ENCODE measurements at regions of chr20 and their contacts with region 1.

Region 1: GRCh38 chr20:50790651-50791277 is 4.1 kb upstream of the BCAS4 start:
- DNase-seq: peak; percentile 78 to 95 (median 88)
- ATAC-seq: peak; percentile 72 to 91 (median 84)
- H3K4me3 ChIP-seq: peak overlapping the region in 1 of 4 donors; percentile 11
- H3K27ac ChIP-seq: peak overlapping the region; percentile 65 to 89 (median 74)
- H3K4me1 ChIP-seq: peaks cover 0 to 7% (median 4%) of the 10 kb centered on the region in 3 donors
- H3K27me3 ChIP-seq: no peaks in the 10 kb centered on the region
- CTCF ChIP-seq: peak in 3 of 4 donors; percentile 34 to 60 (median 56)

Region 2: GRCh38 chr20:50744143-50744792 is 46.5 kb before region 1 on chr20:
- intact Hi-C with region 1: no loop called
- DNase-seq: peak in 4 of 6 donors; percentile 57 to 77 (median 70)
- ATAC-seq: peak; percentile 81 to 90 (median 89)
- H3K4me3 ChIP-seq: no peak overlapping the region
- H3K27ac ChIP-seq: peak overlapping the region; percentile 9 to 85 (median 66)
- H3K4me1 ChIP-seq: peaks cover 7 to 46% (median 11%) of the 10 kb centered on the region in 3 donors
- H3K27me3 ChIP-seq: no peaks in the 10 kb centered on the region
- CTCF ChIP-seq: no peak

Region 3: DNA sequence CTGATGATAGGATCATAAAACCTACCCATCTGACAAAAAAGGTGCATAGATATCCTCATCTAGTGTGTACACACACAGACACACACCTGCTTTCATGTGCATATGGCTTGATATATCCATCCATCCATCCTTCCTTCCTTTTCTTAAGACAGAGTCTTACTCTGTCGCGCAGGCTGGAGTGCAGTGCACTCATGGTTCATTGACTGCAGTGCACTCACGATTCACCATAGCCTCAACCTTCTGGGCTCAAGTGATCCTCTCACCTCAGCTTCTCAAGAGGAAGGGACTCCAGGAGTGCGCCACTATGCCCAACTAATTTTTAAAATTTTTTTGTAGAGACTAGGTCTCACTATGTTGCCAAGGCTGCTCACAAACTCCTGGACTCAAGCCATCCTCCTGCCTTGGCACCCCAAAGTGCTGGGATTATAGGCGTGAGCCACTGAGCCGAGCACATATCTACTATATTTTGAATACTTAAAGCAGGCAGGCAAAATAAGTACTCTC is 113.4 kb after region 1 on chr20:
- intact Hi-C with region 1: loop called in 1 of 3 experiments (anchors 10 kb)
- DNase-seq: no peak
- ATAC-seq: peak in 2 of 4 donors; percentile 32 to 36
- H3K4me3 ChIP-seq: no peak overlapping the region
- H3K27ac ChIP-seq: no peak overlapping the region
- H3K4me1 ChIP-seq: peaks cover 0 to 8% (median 6%) of the 10 kb centered on the region in 3 donors
- H3K27me3 ChIP-seq: no peaks in the 10 kb centered on the region
- CTCF ChIP-seq: no peak

Region 4: DNA sequence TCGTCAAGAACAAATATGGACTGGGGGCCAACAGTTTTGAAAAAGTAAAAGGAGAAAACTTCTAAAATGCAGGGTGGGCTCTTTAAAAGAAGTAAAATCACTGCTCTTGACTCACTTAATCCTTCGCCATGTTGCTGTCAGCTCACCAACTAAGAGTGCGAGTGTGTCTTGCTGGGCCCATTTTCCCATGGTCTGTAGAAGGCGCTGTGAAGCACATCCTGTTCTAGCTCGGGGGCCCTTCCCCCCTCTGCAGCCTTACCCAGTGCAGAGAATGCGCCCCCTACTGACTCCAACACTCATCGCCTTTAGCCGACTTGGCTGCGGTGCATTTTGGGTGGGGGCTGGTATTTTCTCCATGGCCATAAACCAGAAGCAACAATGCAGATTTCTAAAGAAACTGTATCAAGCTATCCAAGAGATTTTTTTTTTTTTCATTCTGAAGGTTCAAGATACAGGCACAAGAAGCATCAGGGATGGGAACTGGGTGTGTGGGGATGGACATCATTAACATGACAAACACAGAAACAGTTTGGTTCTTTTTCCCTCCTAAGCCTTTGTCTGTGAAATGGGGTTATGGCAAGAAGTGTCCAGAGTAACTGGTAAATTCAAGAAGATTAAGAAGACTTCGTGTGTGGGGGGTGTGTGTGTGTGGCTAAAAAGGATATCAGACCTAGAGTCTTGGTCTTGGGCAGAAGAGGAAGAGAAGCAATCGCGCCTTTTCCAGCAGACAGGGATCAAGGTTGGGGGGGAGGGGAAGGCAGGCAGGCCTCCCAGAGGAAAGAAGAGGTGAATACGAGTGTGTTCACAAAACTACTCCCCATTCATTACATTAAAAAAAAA is 138.8 kb after region 1 on chr20:
- intact Hi-C with region 1: loop called in 1 of 3 experiments (anchors 10 kb)
- DNase-seq: peak; percentile 81 to 92 (median 89)
- ATAC-seq: peak; percentile 55 to 81 (median 76)
- H3K4me3 ChIP-seq: peak overlapping the region; percentile 69 to 84 (median 76)
- H3K27ac ChIP-seq: peak overlapping the region; percentile 41 to 73 (median 52)
- H3K4me1 ChIP-seq: peaks cover 0 to 36% (median 32%) of the 10 kb centered on the region in 3 donors
- H3K27me3 ChIP-seq: no peaks in the 10 kb centered on the region
- CTCF ChIP-seq: peak; percentile 61 to 86 (median 74)

Region 5: GRCh38 chr20:50943069-50943468 is 152.3 kb after region 1 on chr20:
- intact Hi-C with region 1: loop called in 1 of 3 experiments (anchors 10 kb)
- DNase-seq: no peak
- ATAC-seq: no peak
- H3K4me3 ChIP-seq: no peak overlapping the region
- H3K27ac ChIP-seq: no peak overlapping the region
- H3K4me1 ChIP-seq: no peaks in the 10 kb centered on the region
- H3K27me3 ChIP-seq: no peaks in the 10 kb centered on the region
- CTCF ChIP-seq: no peak

Region 6: DNA sequence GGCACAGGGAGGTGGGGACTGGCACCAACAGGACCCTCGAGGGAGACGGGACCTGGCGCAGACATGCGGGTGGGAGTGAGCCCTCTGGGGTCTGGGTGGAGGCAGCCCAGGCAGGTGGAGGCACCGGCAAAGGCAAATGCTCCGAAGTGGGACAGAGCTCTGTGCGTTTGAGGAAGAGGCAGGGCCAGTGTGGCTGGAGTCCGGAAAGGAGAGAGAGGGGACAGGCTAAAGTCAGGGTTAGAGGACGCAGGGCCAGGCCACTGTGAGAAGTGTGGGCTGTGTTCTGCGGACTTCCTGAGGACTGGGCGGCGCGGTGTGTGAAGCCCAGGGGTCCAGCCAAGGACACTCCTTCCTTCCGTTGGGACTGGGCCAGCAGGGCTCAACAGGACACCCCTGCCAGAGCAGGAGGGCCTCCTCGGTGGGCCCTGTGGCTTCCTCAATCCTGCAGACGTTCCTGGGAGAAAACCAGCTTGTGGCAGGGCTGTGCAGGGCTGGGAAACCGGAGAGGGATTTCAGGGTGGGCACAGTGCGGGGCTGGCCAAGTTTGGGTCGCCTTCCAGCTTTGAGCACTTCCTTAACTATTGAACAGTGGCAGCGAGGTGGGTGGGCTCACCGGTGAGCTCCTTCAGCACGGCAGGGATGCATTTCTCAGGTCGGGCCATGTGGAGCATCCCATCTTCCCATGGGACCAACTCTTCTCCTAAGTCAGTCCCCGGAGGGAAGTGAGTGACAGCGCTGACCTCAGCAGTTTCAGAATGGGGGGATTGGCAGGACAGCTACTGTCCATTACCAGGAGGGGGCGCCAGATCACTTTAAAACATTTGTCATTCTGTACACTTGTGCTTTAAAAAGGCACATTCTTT is 190.3 kb after region 1 on chr20:
- intact Hi-C with region 1: no loop called
- DNase-seq: peak in 5 of 6 donors; percentile 16 to 65 (median 47)
- ATAC-seq: peak; percentile 28 to 77 (median 66)
- H3K4me3 ChIP-seq: no peak overlapping the region
- H3K27ac ChIP-seq: no peak overlapping the region
- H3K4me1 ChIP-seq: no peaks in the 10 kb centered on the region
- H3K27me3 ChIP-seq: no peaks in the 10 kb centered on the region
- CTCF ChIP-seq: peak; percentile 56 to 85 (median 64)

Region 7: DNA sequence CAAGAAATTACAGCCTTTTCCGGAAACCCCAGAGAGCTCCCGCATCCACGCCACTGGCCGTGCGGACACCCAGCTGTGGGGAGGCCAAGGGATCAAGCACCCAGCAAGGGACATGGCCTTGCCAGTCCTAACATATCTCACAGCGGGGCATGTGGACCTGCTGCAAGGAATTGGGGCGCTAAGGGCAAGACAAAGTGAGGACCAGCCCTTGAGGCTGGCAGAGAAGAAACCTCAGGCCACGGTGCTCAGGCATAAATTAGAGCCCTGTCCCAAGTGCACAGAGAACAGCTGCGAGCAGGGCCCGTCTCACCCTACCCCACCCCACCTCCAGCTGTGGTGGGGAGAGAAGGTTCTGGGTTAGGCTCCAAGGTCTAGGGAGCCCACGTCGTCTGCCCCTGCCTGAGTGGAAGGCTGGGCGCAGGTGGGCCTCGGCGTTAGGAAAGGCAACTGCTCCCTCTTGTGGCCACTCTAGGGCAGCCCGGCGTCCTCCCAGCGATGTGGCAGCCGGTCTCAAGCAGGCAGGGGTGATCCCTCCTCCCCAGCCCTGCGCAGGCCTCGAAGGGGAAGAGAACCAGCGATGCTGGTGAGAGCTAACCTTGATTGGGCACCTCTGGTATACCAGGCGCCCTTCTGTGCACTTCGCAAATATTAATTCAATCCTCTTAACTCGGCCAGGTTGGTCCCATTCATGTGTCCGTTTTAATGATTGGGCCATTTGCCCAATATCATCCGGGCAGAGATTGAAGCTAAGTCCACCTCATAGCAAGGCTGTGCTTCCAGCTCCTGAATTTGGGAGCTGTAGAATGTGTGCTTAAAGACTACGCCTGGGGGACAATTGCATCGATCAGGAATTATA is 516.0 kb after region 1 on chr20:
- intact Hi-C with region 1: loop called in 1 of 3 experiments (anchors 10 kb)
- DNase-seq: peak; percentile 38 to 91 (median 76)
- ATAC-seq: peak; percentile 92 to 98 (median 98)
- H3K4me3 ChIP-seq: no peak overlapping the region
- H3K27ac ChIP-seq: no peak overlapping the region
- H3K4me1 ChIP-seq: no peaks in the 10 kb centered on the region
- H3K27me3 ChIP-seq: no peaks in the 10 kb centered on the region
- CTCF ChIP-seq: peak; percentile 84 to 93 (median 90)

Measured in pancreas (tissue), 10 donors.